ENCODE measurements at regions of chr11 and their contacts with region 1.

Region 1: DNA sequence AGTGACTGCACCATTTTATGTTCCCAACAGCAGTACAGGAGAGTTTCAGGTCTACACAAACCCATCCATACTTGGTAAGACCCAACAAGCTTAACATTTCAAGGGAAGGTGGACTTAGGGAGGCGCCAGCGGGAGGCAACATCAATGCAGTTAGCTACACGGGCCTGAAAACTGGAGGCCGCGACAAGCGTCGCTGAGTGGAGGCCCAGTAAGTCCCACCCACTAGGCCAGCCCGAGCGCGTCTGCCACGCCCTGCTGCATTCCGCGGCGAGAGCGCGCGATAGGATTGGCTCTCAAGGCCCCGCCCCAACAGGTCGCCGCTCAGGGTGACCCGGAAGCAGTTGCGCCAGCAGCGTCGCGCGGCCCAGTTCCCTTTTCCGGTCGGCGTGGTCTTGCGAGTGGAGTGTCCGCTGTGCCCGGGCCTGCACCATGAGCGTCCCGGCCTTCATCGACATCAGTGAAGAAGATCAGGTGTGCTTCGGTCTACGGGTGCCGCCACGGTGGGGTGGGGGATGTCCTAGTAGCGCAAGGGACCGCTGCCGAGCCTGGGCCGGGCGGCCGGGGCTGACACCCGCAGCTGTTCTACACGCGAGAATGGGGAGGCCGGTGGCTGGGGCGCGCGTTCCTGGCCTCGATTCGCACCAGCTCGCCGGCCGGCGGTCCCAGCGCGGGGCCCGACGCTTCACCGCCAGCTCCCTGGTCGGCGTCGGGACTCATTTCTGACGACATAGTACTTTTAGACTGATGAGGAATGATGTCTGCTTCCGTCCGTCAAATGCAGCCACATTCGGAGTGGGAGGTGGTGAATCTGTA is at the start of gene EIF3M:
- DNase-seq: peak; percentile 90
- ATAC-seq: peak; percentile 100
- H3K4me3 Mint-ChIP-seq: peak within 1 kb of the TSS; percentile 95
- H3K27ac Mint-ChIP-seq: peak within 1 kb of the TSS; percentile 92
- H3K4me1 Mint-ChIP-seq: peaks cover 41% of the 10 kb centered on the region
- H3K27me3 Mint-ChIP-seq: no peaks in the 10 kb centered on the region
- CTCF ChIP-seq: no peak
- total RNA-seq, gene EIF3M: 234 and 248 TPM in 2 replicates

Region 2: GRCh38 chr11:31509429-31510345 is 1074.0 kb before region 1 on chr11 and contains the starts of genes ELP4 and IMMP1L:
- CTCF ChIA-PET with region 1: no interaction called
- POLR2A ChIA-PET with region 1: no interaction called
- intact Hi-C with region 1: loop called (anchors 10 kb)
- DNase-seq: peak; percentile 84
- ATAC-seq: peak; percentile 99
- H3K4me3 Mint-ChIP-seq: peak within 1 kb of the TSS; percentile 98
- H3K27ac Mint-ChIP-seq: peak within 1 kb of the TSS; percentile 95
- H3K4me1 Mint-ChIP-seq: peaks cover 37% of the 10 kb centered on the region
- H3K27me3 Mint-ChIP-seq: no peaks in the 10 kb centered on the region
- CTCF ChIP-seq: no peak
- total RNA-seq, gene ELP4: 20.4 and 25.5 TPM in 2 replicates
- total RNA-seq, gene IMMP1L: 16.6 and 17.9 TPM in 2 replicates

Region 3: DNA sequence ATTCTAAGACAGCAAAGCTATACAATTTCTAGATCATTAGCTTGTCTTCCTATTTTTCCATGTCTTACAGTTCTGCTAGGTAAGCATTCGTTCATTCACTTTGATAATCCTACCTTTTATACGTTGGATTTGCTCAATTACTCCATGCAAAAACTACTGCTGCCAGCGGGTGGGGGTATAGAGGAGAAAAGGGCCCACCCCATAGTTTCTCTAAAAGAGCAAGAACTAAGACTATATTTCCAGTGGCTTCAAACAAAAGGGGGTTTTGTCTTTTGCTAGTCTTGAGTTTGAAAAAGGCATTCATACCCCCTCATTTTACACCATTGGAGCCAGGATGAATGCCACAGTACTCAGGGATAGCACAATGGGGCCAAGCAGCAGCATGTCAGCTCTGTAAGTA is 304.0 kb before region 1 on chr11:
- CTCF ChIA-PET with region 1: no interaction called
- POLR2A ChIA-PET with region 1: no interaction called
- intact Hi-C with region 1: no loop called
- DNase-seq: no peak
- ATAC-seq: no peak
- H3K4me3 Mint-ChIP-seq: no peak overlapping the region
- H3K27ac Mint-ChIP-seq: no peak overlapping the region
- H3K4me1 Mint-ChIP-seq: no peaks in the 10 kb centered on the region
- H3K27me3 Mint-ChIP-seq: peaks cover 6% of the 10 kb centered on the region
- CTCF ChIP-seq: no peak

Region 4: GRCh38 chr11:32792948-32793475 is 209.3 kb after region 1 on chr11:
- CTCF ChIA-PET with region 1: interaction called, 3 read pairs
- POLR2A ChIA-PET with region 1: no interaction called
- intact Hi-C with region 1: loop called (anchors 10 kb)
- DNase-seq: peak; percentile 30
- ATAC-seq: peak; percentile 62
- H3K4me3 Mint-ChIP-seq: peak overlapping the region; percentile 15
- H3K27ac Mint-ChIP-seq: no peak overlapping the region
- H3K4me1 Mint-ChIP-seq: peaks cover 6% of the 10 kb centered on the region
- H3K27me3 Mint-ChIP-seq: no peaks in the 10 kb centered on the region
- CTCF ChIP-seq: peak; percentile 62

Region 5: DNA sequence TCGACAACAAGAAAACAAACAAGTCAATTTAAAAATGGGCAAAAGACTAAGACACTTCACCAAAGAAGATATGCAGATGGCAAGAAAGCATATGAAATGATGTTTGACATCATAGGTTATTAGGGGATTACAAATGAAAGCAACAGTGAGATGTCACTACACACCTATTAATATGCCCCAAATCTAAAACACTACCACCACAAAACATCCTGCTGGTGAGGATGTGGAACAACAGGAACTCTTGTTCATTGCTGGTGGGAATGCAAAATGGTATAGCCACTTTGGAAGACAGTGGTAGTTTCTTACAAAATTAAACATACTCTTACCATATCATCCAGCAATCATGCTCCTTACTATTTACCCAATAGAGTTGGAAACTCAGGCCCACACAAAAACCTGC is 275.1 kb after region 1 on chr11:
- CTCF ChIA-PET with region 1: no interaction called
- POLR2A ChIA-PET with region 1: no interaction called
- intact Hi-C with region 1: no loop called
- DNase-seq: no peak
- ATAC-seq: no peak
- H3K4me3 Mint-ChIP-seq: no peak overlapping the region
- H3K27ac Mint-ChIP-seq: no peak overlapping the region
- H3K4me1 Mint-ChIP-seq: no peaks in the 10 kb centered on the region
- H3K27me3 Mint-ChIP-seq: peaks cover 2% of the 10 kb centered on the region
- CTCF ChIP-seq: no peak

Region 6: DNA sequence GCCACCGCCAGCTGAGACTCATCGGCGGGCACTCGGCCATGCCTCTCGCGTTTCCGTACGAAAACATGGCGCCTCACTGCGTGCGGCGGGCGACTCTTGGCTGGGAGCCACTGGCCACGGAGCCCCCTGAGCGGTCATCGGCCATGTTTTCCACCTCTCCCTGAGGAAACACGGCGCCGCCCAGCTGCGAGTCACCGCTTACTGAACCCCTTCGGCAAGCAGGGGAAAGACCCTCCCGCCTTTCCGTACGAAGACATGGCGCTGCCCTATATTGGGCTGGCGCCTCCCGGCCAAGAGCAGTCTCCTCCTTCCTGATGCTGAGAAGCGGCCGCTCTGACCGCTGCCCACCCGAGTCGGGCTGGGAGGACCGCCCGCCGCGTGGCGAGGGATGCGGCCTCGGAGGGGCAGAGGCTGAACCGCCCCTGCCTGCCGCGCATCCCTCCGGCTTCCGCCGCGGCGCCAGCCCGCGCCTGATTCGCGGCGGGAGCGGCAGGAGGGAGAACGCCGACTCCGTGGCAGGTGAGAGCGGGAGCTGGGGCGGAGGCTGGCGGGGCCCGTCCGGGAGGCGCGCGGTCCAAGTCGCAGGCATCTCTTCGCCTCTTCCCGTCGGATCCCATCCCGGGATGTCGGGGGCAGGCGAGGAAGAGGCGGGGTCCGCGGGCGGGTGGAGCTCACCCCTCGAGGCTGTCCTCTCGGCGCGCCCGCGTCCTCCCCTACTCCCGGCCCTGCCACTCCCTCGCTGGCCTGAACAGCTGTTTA is 455.8 kb after region 1 on chr11 and contains the start of gene TCP11L1:
- CTCF ChIA-PET with region 1: no interaction called
- POLR2A ChIA-PET with region 1: no interaction called
- intact Hi-C with region 1: loop called (anchors 1 kb)
- DNase-seq: peak; percentile 77
- ATAC-seq: peak; percentile 85
- H3K4me3 Mint-ChIP-seq: peak within 1 kb of the TSS; percentile 95
- H3K27ac Mint-ChIP-seq: peak within 1 kb of the TSS; percentile 95
- H3K4me1 Mint-ChIP-seq: peaks cover 13% of the 10 kb centered on the region
- H3K27me3 Mint-ChIP-seq: peaks cover 8% of the 10 kb centered on the region
- CTCF ChIP-seq: no peak
- total RNA-seq, gene TCP11L1: 13.5 and 17.7 TPM in 2 replicates

Measured in activated B cell treated with CpG ODN at 0.5 μM for 24 hours (primary cell).